Lower leg skin (tissue), 4 donors: ENCODE measurements at regions of chr4 and their contacts with region 1.

Region 1: DNA sequence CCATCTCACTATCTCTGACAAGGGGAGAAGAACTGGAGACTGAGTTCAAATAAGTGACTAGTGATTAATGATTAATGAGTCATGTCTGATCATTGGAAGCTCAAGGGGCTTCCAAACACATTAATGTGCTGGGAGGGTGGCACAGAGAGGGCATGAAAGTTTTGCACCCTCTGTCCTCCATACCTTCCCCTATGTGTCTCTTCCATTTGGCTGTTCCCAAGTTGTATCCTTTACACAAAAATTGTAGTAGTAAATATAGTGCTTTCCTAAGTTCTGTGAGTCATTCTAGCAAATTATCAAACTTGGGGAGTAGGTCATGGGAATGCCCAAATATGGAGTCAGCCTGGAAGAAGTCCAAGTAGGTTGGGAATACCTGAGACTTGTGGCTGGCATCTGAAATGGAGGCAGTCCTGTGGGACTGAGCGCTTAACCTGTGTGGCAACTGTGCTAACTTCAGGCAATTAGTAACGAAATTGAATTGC is 4.1 kb upstream of the FAM200B start:
- DNase-seq: peak in 1 of 2 donors; percentile 45
- H3K4me3 ChIP-seq: no peak overlapping the region
- CTCF ChIP-seq: no peak
- POLR2A ChIP-seq: no peak

Region 2: DNA sequence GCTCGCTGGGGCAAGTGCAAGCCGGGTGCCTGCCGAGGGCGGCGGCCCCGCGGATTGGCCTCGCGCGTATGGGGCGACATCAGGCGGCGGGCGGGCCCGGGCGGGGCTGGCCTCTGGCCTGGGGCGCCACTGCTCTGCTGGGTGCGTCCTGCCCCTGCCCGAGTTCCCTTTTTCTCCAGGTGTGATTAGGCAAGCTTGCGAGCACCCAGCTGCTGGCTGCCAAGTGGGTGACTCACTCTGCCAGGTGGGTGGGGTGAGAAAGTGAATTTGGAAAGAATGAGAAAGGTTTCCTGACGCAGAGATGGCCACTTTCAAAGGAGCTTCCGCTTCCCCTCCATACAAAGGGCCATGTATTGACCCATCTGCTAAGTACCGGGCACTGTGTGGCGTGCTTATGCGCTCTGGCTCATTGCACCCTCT is 228.5 kb after region 1 on chr4:
- intact Hi-C with region 1: loop called (anchors 10 kb)
- DNase-seq: peak; percentile 73 to 89
- H3K4me3 ChIP-seq: no peak overlapping the region
- CTCF ChIP-seq: no peak
- POLR2A ChIP-seq: no peak